ENCODE measurements at regions of chr7 and their contacts with region 1.

Region 1: DNA sequence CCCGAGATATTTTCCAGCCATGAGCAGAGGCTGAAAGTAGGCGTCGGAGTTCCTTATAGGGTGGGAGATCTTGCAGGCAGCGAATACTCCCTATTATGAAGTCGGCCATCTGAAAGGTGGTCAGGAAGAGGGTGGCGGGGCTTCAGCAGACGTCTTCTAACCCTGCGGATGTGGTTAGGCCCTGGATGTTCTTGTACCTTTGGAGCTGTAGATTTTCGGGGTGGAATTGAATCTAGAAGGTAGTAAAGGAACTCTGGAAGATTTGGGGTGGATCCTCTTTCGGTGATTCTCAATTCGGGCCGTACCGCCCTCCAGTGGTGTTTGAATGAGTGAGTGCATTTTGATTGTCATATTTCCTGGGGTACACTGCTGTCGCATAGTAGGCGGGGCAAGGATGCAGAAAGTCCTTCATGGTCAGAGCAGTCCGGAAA is 635 bp downstream of the NUP205 start:
- DNase-seq: peak; percentile 79
- H3K4me3 Mint-ChIP-seq: no peak overlapping the region
- H3K27ac Mint-ChIP-seq: no peak overlapping the region
- H3K4me1 Mint-ChIP-seq: peaks cover 29% of the 10 kb centered on the region
- H3K27me3 Mint-ChIP-seq: no peaks in the 10 kb centered on the region

Region 2: DNA sequence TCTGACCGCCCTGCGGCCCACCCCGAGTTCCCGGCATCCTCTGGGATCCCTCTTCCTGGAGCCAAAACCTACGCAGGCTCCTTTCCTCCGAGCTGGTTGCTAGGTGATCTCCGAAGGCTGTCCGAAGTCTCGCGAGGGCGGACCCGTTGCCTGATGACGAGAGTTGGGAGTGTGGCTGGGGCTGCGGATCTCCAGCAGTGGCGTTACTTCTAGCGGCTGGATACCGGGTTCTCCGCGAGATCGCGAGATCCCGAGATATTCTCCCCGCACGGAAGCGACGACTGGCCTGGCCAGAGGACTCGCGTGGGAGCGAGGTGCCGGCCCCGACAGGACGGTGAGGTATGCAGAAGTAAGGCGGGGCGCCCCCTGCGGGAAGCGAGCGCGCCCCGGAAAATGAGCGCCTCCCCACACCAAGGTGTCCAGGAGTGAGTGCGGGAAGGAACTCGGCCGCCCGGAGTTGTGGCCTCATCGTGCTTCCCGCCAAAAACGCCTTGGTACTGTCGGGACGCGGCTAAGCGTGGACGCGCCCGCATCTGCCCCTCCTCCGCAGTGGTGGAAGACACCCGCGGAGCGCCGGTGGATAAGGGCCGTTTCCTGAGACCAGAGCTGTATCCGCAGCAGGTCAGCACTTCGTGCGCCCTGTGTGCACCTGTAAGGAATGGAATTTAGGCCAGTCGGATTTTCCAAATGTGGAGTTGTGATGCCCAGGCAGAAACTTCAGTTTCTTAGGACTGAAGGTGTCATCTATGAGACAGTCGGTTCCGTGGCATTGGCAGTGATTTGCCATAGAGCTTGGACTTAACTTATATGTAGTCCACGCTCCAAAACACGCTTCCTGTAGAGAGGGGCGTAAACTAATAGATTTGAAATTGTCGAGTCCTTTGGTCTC is 571.7 kb before region 1 on chr7 and contains the start of gene AGBL3:
- CTCF ChIA-PET with region 1: no interaction called
- intact Hi-C with region 1: loop called (anchors 5 kb)
- DNase-seq: peak; percentile 97
- H3K4me3 Mint-ChIP-seq: peak within 1 kb of the TSS; percentile 96
- H3K27ac Mint-ChIP-seq: peak within 1 kb of the TSS; percentile 98
- H3K4me1 Mint-ChIP-seq: peaks cover 32% of the 10 kb centered on the region
- H3K27me3 Mint-ChIP-seq: no peaks in the 10 kb centered on the region
- total RNA-seq, gene AGBL3: 2.6 to 3.6 TPM

Region 3: GRCh38 chr7:135414850-135415439 is 143.4 kb before region 1 on chr7:
- CTCF ChIA-PET with region 1: no interaction called
- intact Hi-C with region 1: loop called (anchors 1 kb)
- DNase-seq: peak; percentile 58
- H3K4me3 Mint-ChIP-seq: no peak overlapping the region
- H3K27ac Mint-ChIP-seq: no peak overlapping the region
- H3K4me1 Mint-ChIP-seq: peaks cover 6% of the 10 kb centered on the region
- H3K27me3 Mint-ChIP-seq: no peaks in the 10 kb centered on the region